Sigmoid colon (tissue), 7 donors: ENCODE measurements at regions of chr16 and their contacts with region 1.

Region 1: GRCh38 chr16:81723098-81723723 is 55.9 kb upstream of the PLCG2 start:
- DNase-seq: no peak
- H3K4me3 ChIP-seq: no peak overlapping the region
- H3K27ac ChIP-seq: peak overlapping the region in 1 of 4 donors; percentile 66
- H3K4me1 ChIP-seq: peaks cover 0 to 29% (median 21%) of the 10 kb centered on the region in 4 donors
- H3K27me3 ChIP-seq: no peaks in the 10 kb centered on the region
- CTCF ChIP-seq: peak; percentile 68 to 77 (median 72)
- EP300 ChIP-seq: no peak
- POLR2A ChIP-seq: no peak

Region 2: DNA sequence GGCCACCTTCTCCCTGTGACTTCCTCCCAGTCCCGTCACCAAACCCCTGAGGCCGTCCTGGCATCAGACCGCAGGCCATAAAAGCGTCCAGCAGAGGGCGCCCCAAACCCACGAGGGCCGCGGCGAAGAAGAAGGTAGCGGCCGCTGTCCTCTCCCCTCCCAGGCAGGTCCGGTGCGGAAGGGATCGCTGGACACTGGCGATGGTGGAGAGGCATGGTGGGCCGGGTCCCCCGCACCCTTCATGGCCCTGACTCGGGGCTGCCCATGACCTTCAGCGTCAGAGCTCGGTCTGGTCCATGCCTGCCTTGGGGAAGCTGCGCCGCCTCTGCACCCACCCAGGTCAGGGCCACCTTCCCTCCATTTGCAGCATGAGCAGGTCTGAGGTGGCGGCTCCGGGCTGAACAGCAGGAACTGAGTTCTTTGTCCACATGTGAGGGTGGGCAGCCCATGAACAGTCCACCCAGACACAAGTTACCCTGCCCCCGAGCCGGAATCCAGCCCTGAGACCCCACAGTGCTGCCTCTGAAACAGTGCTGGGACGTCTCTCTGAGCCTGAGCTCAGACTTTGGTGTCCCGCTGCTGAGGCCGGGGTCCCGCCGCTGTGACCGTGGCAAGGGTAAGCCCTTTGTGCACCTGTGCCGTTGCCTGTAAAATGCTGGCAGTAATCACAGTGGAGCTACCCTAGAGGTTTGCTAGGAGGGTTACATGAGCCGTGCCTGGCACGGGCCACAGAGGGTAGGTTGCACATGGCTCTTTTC is 319.4 kb before region 1 on chr16:
- intact Hi-C with region 1: loop called (anchors 1 kb)
- DNase-seq: peak; percentile 90
- H3K4me3 ChIP-seq: peak overlapping the region in 3 of 4 donors; percentile 19 to 34 (median 30)
- H3K27ac ChIP-seq: no peak overlapping the region
- H3K4me1 ChIP-seq: peaks cover 0 to 14% (median 6%) of the 10 kb centered on the region in 4 donors
- H3K27me3 ChIP-seq: no peaks in the 10 kb centered on the region
- CTCF ChIP-seq: peak; percentile 89 to 98 (median 94)
- EP300 ChIP-seq: no peak
- POLR2A ChIP-seq: no peak

Region 3: GRCh38 chr16:81632392-81633146 is 90.6 kb before region 1 on chr16:
- intact Hi-C with region 1: no loop called
- DNase-seq: no peak
- H3K4me3 ChIP-seq: no peak overlapping the region
- H3K27ac ChIP-seq: peak overlapping the region in 3 of 4 donors; percentile 22 to 60 (median 39)
- H3K4me1 ChIP-seq: peaks cover 0 to 26% (median 23%) of the 10 kb centered on the region in 4 donors
- H3K27me3 ChIP-seq: no peaks in the 10 kb centered on the region
- CTCF ChIP-seq: no peak
- EP300 ChIP-seq: peak in 1 of 4 donors; percentile 26
- POLR2A ChIP-seq: no peak

Region 4: GRCh38 chr16:82425661-82426060 is 702.5 kb after region 1 on chr16:
- intact Hi-C with region 1: no loop called
- DNase-seq: no peak
- H3K4me3 ChIP-seq: no peak overlapping the region
- H3K27ac ChIP-seq: no peak overlapping the region
- H3K4me1 ChIP-seq: no peaks in the 10 kb centered on the region
- H3K27me3 ChIP-seq: no peaks in the 10 kb centered on the region
- CTCF ChIP-seq: no peak
- EP300 ChIP-seq: no peak
- POLR2A ChIP-seq: no peak